Cardiac septum (tissue), 1 donor: ENCODE measurements at regions of chr10 and their contacts with region 1.

Region 1: GRCh38 chr10:35642027-35642792 is at the start of gene FZD8:
- DNase-seq: peak; percentile 94
- total RNA-seq, gene FZD8: 7.7 TPM

Region 2: GRCh38 chr10:35447693-35448407 is 194.4 kb before region 1 on chr10:
- intact Hi-C with region 1: loop called (anchors 5 kb)
- DNase-seq: no peak

Region 3: GRCh38 chr10:35916791-35917190 is 274.6 kb after region 1 on chr10:
- intact Hi-C with region 1: loop called (anchors 10 kb)
- DNase-seq: no peak

Region 4: GRCh38 chr10:36171953-36172940 is 530.0 kb after region 1 on chr10:
- intact Hi-C with region 1: loop called (anchors 5 kb)
- DNase-seq: no peak

Region 5: GRCh38 chr10:36489611-36490228 is 847.5 kb after region 1 on chr10:
- intact Hi-C with region 1: loop called (anchors 5 kb)
- DNase-seq: no peak